Panc1 (cell line): ENCODE measurements at regions of chr3 and their contacts with region 1.

Region 1: GRCh38 chr3:130746246-130747039 is at the start of gene PIK3R4:
- DNase-seq: peak; percentile 95
- ATAC-seq: peak; percentile 99
- H3K4me3 ChIP-seq: peak within 1 kb of the TSS; percentile 95
- H3K27ac ChIP-seq: peak within 1 kb of the TSS; percentile 89
- H3K4me1 ChIP-seq: peaks cover 24% of the 10 kb centered on the region
- H3K27me3 ChIP-seq: no peaks in the 10 kb centered on the region
- CTCF ChIP-seq: no peak
- total RNA-seq, gene PIK3R4: 26.1 TPM

Region 2: GRCh38 chr3:130569461-130570365 is 176.7 kb before region 1 on chr3:
- CTCF ChIA-PET with region 1: no interaction called
- POLR2A ChIA-PET with region 1: no interaction called
- in situ Hi-C with region 1: no loop called
- intact Hi-C with region 1: no loop called
- DNase-seq: no peak
- ATAC-seq: no peak
- H3K4me3 ChIP-seq: no peak overlapping the region
- H3K27ac ChIP-seq: no peak overlapping the region
- H3K4me1 ChIP-seq: no peaks in the 10 kb centered on the region
- H3K27me3 ChIP-seq: peaks cover 38% of the 10 kb centered on the region
- CTCF ChIP-seq: no peak

Region 3: DNA sequence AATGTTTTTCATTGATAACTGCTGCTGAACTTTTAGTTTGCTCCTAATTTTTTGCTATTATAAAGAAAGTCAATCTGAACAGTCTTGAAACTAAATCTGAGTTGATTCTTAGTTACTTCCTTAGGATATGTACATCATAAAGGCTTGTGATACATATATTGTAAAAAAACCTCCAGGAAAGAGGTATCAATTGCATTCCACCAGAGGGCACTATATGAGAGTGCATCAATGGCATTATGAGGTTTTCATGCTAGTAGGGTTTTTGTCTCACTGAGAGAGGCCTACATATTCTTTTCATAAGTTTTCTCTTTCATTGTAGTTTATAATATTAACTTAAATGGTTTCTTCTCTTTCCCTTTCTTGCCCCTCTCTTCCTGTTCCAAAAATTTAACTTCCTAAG is 46.7 kb before region 1 on chr3:
- CTCF ChIA-PET with region 1: no interaction called
- POLR2A ChIA-PET with region 1: no interaction called
- in situ Hi-C with region 1: no loop called
- intact Hi-C with region 1: no loop called
- DNase-seq: no peak
- ATAC-seq: 0 out of 2 replicates have a peak, but pooled peaks have one; percentile 71
- H3K4me3 ChIP-seq: no peak overlapping the region
- H3K27ac ChIP-seq: no peak overlapping the region
- H3K4me1 ChIP-seq: no peaks in the 10 kb centered on the region
- H3K27me3 ChIP-seq: no peaks in the 10 kb centered on the region
- CTCF ChIP-seq: peak; percentile 69; the same call in 1 of the 2 replicates

Region 4: GRCh38 chr3:130787422-130788068 is 41.1 kb after region 1 on chr3:
- CTCF ChIA-PET with region 1: no interaction called
- POLR2A ChIA-PET with region 1: no interaction called
- in situ Hi-C with region 1: no loop called
- intact Hi-C with region 1: no loop called
- DNase-seq: no peak
- ATAC-seq: no peak
- H3K4me3 ChIP-seq: no peak overlapping the region
- H3K27ac ChIP-seq: no peak overlapping the region
- H3K4me1 ChIP-seq: no peaks in the 10 kb centered on the region
- H3K27me3 ChIP-seq: peaks cover 2% of the 10 kb centered on the region; the same call in 1 of the 2 replicates
- CTCF ChIP-seq: no peak

Region 5: DNA sequence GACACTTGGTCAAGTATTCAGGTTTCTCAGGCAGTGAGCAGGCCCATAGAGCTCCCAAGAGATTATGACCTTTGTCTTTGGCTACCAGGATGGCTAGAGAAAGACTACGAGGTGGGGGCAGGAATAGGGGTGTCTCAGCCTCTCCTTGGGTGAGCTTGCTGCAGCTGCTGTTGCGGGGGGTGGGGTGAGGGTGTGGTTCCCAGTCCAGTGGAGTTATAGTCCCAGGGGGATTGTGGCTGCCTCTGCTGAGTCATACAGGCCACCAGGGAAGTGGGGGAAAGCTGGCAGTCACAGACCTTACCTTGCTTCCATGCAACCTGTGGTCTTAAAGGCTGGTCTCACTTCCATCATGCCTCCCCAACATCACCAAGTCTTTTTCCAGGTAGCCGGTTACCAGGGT is 179.2 kb after region 1 on chr3:
- CTCF ChIA-PET with region 1: no interaction called
- POLR2A ChIA-PET with region 1: interaction called, 14 read pairs
- in situ Hi-C with region 1: no loop called
- intact Hi-C with region 1: no loop called
- DNase-seq: no peak
- ATAC-seq: no peak
- H3K4me3 ChIP-seq: no peak overlapping the region
- H3K27ac ChIP-seq: no peak overlapping the region
- H3K4me1 ChIP-seq: no peaks in the 10 kb centered on the region
- H3K27me3 ChIP-seq: no peaks in the 10 kb centered on the region
- CTCF ChIP-seq: no peak